CD8-positive, alpha-beta memory T cell (primary cell): ENCODE measurements at regions of chr15 and their contacts with region 1.

Region 1: GRCh38 chr15:64542091-64542490 is 81.7 kb downstream of the ZNF609 start:
- DNase-seq: no peak
- H3K4me3 ChIP-seq: no peak overlapping the region
- H3K4me3 Mint-ChIP-seq: no peak overlapping the region
- H3K27ac ChIP-seq: no peak overlapping the region
- H3K27ac Mint-ChIP-seq: peak overlapping the region in 2 of 8 donors; percentile 13 to 36
- H3K4me1 ChIP-seq: no peaks in the 10 kb centered on the region
- H3K4me1 Mint-ChIP-seq: peaks cover 22 to 47% (median 43%) of the 10 kb centered on the region in 3 donors
- H3K27me3 ChIP-seq: no peaks in the 10 kb centered on the region
- H3K27me3 Mint-ChIP-seq: no peaks in the 10 kb centered on the region

Region 2: GRCh38 chr15:64387562-64388168 is 154.4 kb before region 1 on chr15 and contains the start of gene TRIP4:
- CTCF ChIA-PET with region 1: no interaction called
- POLR2A ChIA-PET with region 1: no interaction called
- DNase-seq: peak; percentile 93 to 97 (median 95)
- H3K4me3 ChIP-seq: peak within 1 kb of the TSS; percentile 96
- H3K4me3 Mint-ChIP-seq: peak within 1 kb of the TSS; percentile 94 to 100 (median 98)
- H3K27ac ChIP-seq: peak within 1 kb of the TSS; percentile 81
- H3K27ac Mint-ChIP-seq: peak within 1 kb of the TSS; percentile 73 to 98 (median 96)
- H3K4me1 ChIP-seq: peaks cover 19% of the 10 kb centered on the region
- H3K4me1 Mint-ChIP-seq: peaks cover 17 to 27% (median 20%) of the 10 kb centered on the region in 3 donors
- H3K27me3 ChIP-seq: no peaks in the 10 kb centered on the region
- H3K27me3 Mint-ChIP-seq: no peaks in the 10 kb centered on the region
- total RNA-seq, gene TRIP4: 25.1 to 26.2 TPM

Region 3: DNA sequence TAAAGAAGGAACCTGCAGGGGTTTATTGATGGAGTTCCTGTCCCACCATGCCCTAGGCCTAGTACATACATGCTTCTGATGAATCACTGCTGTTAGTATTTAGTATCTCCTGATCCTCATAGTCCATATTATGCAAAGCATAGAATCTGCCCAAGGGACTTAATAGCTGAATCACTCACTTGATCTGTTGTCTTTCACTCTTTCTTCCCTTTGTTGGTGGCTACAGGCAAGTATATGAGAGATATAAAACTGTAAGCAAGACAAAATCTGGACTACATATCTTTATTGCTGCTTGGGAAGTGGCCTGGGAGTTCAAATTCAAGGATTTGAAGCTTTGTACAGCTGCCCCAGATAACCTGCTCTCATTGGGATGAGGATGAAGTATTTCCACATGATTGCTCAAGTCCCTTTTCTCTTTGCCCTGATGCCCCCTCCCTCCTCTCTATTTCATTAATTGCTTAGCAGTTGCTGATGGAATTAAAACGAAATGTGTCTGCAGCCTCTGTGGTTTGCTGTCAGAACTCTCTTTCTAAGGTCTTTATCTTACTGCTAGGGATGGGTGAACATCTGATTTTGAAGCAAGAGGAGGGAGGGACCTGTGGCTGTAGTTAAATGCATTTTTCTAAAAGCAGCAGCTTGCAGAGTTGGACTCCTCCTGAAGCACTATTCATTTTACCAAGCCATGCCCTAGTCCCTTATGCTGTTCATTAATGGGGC is 32.4 kb after region 1 on chr15:
- CTCF ChIA-PET with region 1: no interaction called
- POLR2A ChIA-PET with region 1: interaction called, 12 read pairs
- DNase-seq: no peak
- H3K4me3 ChIP-seq: no peak overlapping the region
- H3K4me3 Mint-ChIP-seq: no peak overlapping the region
- H3K27ac ChIP-seq: no peak overlapping the region
- H3K27ac Mint-ChIP-seq: peak overlapping the region in 6 of 8 donors; percentile 15 to 78 (median 22)
- H3K4me1 ChIP-seq: peaks cover 34% of the 10 kb centered on the region
- H3K4me1 Mint-ChIP-seq: peaks cover 30 to 55% (median 52%) of the 10 kb centered on the region in 3 donors
- H3K27me3 ChIP-seq: no peaks in the 10 kb centered on the region
- H3K27me3 Mint-ChIP-seq: peaks cover 0 to 2% of the 10 kb centered on the region in 2 donors